ENCODE measurements at regions of chr2 and their contacts with region 1.

Region 1: DNA sequence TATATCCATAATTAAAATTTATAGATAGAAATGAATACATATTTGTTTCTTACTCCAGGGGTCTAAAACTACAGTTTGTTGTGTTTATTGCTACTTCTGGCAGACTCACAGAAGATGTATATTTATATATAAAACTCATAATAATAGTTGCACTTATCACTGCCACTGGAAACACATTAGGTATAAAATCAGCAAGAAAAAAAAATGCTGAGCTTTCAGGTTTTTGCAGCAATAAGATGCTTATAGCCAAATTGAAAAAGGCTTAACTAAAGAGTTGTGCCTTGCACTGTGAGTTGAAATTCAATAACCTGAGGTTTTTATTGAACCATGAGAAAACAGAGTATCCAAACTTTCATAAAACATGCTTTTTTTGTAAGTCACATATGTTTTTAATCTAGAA is 623.9 kb upstream of the CRIM1 start:
- DNase-seq: no peak
- H3K4me3 ChIP-seq: no peak overlapping the region
- H3K27ac ChIP-seq: no peak overlapping the region
- H3K4me1 ChIP-seq: no peaks in the 10 kb centered on the region
- H3K27me3 ChIP-seq: no peaks in the 10 kb centered on the region
- CTCF ChIP-seq: no peak
- EP300 ChIP-seq: no peak
- POLR2A ChIP-seq: no peak

Region 2: DNA sequence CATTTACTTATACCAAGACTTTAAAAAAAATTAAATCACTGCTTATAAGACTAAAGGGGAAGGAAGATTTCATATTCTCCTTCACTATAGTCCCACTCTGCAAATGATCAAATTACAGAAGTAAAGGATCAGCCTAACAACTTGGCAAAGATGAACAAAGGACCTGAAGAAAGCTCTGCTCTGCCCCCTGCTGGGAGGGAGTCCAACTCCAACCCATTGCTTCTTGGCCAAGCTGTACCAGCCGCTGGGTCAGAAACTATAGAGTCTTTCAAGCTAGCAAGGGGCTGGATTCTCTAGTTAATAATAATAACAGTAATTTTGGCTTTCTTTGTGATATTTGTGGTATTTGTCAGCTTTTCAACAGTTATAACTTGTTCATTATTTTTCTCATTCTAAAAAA is 303.1 kb before region 1 on chr2:
- intact Hi-C with region 1: no loop called
- DNase-seq: no peak
- H3K4me3 ChIP-seq: no peak overlapping the region
- H3K27ac ChIP-seq: no peak overlapping the region
- H3K4me1 ChIP-seq: no peaks in the 10 kb centered on the region
- H3K27me3 ChIP-seq: no peaks in the 10 kb centered on the region
- CTCF ChIP-seq: no peak
- EP300 ChIP-seq: no peak
- POLR2A ChIP-seq: no peak

Region 3: DNA sequence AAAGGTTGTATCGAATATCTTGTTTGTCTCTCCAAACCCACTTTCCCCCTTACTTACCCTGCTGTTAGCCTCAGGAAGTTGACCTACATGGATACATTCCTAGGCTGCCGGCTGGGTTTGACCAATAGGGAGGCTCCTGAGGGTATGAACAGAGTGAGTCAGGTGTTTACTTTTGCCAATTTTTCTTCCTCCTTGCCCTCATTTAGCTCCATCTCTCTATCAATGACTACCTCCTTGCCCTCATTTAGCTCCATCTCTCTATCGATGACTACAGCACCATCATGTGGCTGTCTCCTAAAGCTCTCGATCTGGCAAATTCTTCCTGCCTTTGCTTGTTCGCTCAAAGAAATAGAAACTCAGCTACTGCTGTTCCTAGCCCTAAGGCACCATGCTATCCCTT is 52.1 kb after region 1 on chr2:
- intact Hi-C with region 1: loop called in 1 of 4 experiments (anchors 10 kb)
- DNase-seq: no peak
- H3K4me3 ChIP-seq: no peak overlapping the region
- H3K27ac ChIP-seq: no peak overlapping the region
- H3K4me1 ChIP-seq: no peaks in the 10 kb centered on the region
- H3K27me3 ChIP-seq: no peaks in the 10 kb centered on the region
- CTCF ChIP-seq: no peak
- EP300 ChIP-seq: no peak
- POLR2A ChIP-seq: no peak

Measured in ovary (tissue), 10 donors.